ENCODE measurements at regions of chr19 and their contacts with region 1.

Region 1: GRCh38 chr19:11035441-11036377 is 53.6 kb upstream of the LDLR start:
- DNase-seq: peak; percentile 74
- H3K4me3 Mint-ChIP-seq: no peak overlapping the region
- H3K27ac Mint-ChIP-seq: no peak overlapping the region
- H3K4me1 Mint-ChIP-seq: no peaks in the 10 kb centered on the region
- H3K27me3 Mint-ChIP-seq: no peaks in the 10 kb centered on the region

Region 2: GRCh38 chr19:10936661-10937084 is 99.0 kb before region 1 on chr19:
- intact Hi-C with region 1: loop called (anchors 1 kb)
- DNase-seq: peak; percentile 20
- H3K4me3 Mint-ChIP-seq: no peak overlapping the region
- H3K27ac Mint-ChIP-seq: no peak overlapping the region
- H3K4me1 Mint-ChIP-seq: peaks cover 5% of the 10 kb centered on the region
- H3K27me3 Mint-ChIP-seq: no peaks in the 10 kb centered on the region

Region 3: GRCh38 chr19:10946964-10947657 is 88.6 kb before region 1 on chr19:
- intact Hi-C with region 1: loop called (anchors 2 kb)
- DNase-seq: no peak
- H3K4me3 Mint-ChIP-seq: no peak overlapping the region
- H3K27ac Mint-ChIP-seq: no peak overlapping the region
- H3K4me1 Mint-ChIP-seq: peaks cover 6% of the 10 kb centered on the region
- H3K27me3 Mint-ChIP-seq: no peaks in the 10 kb centered on the region

Region 4: DNA sequence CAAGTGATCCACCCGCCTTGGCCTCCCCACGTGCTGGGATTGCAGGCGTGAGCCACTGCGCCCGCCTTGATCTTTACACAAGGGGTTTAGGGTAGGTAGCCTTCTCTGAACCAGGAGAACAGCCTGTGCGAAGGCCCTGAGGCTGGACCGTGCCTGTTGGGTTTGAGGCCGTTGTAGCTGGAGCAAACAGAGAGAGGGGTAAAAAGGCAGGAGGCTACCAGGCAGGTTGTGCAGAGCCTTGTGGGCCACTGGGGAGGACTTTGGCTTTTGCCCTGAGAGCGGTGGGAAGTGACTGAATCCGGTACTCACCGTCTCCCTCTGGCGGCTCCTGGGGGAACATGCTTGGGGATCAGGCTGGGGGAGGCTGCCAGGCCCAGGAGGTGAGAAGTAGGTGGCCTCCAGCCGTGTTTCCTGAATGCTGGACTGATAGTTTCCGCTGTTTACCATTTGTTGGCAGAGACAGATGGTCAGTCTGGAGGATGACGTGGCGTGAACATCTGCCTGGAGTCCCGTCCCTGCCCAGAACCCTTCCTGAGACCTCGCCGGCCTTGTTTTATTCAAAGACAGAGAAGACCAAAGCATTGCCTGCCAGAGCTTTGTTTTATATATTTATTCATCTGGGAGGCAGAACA is 95.2 kb after region 1 on chr19:
- intact Hi-C with region 1: loop called (anchors 1 kb)
- DNase-seq: peak; percentile 55
- H3K4me3 Mint-ChIP-seq: no peak overlapping the region
- H3K27ac Mint-ChIP-seq: no peak overlapping the region
- H3K4me1 Mint-ChIP-seq: no peaks in the 10 kb centered on the region
- H3K27me3 Mint-ChIP-seq: no peaks in the 10 kb centered on the region

Region 5: GRCh38 chr19:11203194-11204075 is 167.7 kb after region 1 on chr19:
- intact Hi-C with region 1: loop called (anchors 2 kb)
- DNase-seq: no peak
- H3K4me3 Mint-ChIP-seq: no peak overlapping the region
- H3K27ac Mint-ChIP-seq: no peak overlapping the region
- H3K4me1 Mint-ChIP-seq: no peaks in the 10 kb centered on the region
- H3K27me3 Mint-ChIP-seq: peaks cover 6% of the 10 kb centered on the region